Activated CD4-positive, alpha-beta T cell treated with anti-CD3 and anti-CD28 coated beads for 36 hours (primary cell): ENCODE measurements at regions of chr2 and their contacts with region 1.

Region 1: DNA sequence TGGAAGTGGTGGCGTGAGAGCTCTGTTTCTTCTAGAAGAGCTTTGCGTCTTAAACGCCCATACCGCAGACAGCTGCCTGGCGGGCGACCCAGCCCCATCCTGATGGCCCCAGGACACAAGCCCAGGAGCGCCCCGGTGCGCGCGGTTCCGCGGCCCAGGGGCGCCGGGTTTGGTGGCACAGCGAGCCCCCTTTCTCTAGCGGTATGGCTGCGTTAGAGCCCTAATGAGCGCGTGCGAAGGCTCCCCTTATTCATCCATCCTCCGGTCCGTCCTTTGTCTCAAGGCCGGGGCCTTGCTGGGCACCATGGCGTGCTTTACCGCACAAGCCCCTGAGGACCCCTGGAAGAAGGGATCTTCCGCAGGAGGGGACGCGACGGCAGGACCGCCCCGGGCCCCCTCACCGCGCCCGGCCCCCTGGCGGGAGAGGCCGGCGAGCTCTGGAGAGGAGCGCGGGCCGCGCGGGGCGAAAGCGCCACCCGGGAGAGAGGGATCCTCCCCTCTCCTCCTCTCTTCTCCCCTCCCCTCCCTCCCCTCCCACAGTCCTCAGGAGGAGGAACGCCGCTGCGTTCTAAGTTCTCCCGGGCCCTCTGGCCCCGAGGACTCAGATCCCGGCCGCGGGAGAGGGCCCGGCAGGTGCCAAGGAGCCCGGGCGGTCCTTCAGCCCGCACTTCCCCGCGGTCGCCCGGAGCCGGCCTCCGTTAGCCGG is 626 bp upstream of the SLC1A4 start:
- DNase-seq: peak; percentile 74
- ATAC-seq: peak; percentile 37
- H3K4me3 Mint-ChIP-seq: peak overlapping the region; percentile 68
- H3K27ac Mint-ChIP-seq: peak overlapping the region; percentile 55
- H3K4me1 Mint-ChIP-seq: peaks cover 46% of the 10 kb centered on the region
- H3K27me3 Mint-ChIP-seq: peaks cover 4% of the 10 kb centered on the region

Region 2: GRCh38 chr2:63588385-63589147 is 1400.0 kb before region 1 on chr2 and contains the starts of genes MDH1 and WDPCP:
- CTCF ChIA-PET with region 1: no interaction called
- POLR2A ChIA-PET with region 1: no interaction called
- intact Hi-C with region 1: loop called in 1 of 2 experiments (anchors 5 kb)
- DNase-seq: peak; percentile 96
- ATAC-seq: peak; percentile 92
- H3K4me3 Mint-ChIP-seq: peak within 1 kb of the TSS; percentile 100
- H3K27ac Mint-ChIP-seq: peak within 1 kb of the TSS; percentile 97
- H3K4me1 Mint-ChIP-seq: peaks cover 36% of the 10 kb centered on the region
- H3K27me3 Mint-ChIP-seq: no peaks in the 10 kb centered on the region
- total RNA-seq, gene MDH1: 212 to 265 TPM
- total RNA-seq, gene WDPCP: 6.5 to 8.2 TPM

Region 3: GRCh38 chr2:64144057-64145013 is 844.2 kb before region 1 on chr2 and contains the start of gene PELI1:
- CTCF ChIA-PET with region 1: no interaction called
- POLR2A ChIA-PET with region 1: no interaction called
- intact Hi-C with region 1: loop called in 1 of 2 experiments (anchors 5 kb)
- DNase-seq: peak; percentile 97
- ATAC-seq: peak; percentile 89
- H3K4me3 Mint-ChIP-seq: peak within 1 kb of the TSS; percentile 84
- H3K27ac Mint-ChIP-seq: peak within 1 kb of the TSS; percentile 97
- H3K4me1 Mint-ChIP-seq: peaks cover 30% of the 10 kb centered on the region
- H3K27me3 Mint-ChIP-seq: no peaks in the 10 kb centered on the region
- total RNA-seq, gene PELI1: 21.3 to 29.7 TPM

Region 4: GRCh38 chr2:64704161-64704560 is 284.4 kb before region 1 on chr2:
- CTCF ChIA-PET with region 1: no interaction called
- POLR2A ChIA-PET with region 1: interaction called, 11 read pairs
- intact Hi-C with region 1: no loop called
- DNase-seq: no peak
- ATAC-seq: no peak
- H3K4me3 Mint-ChIP-seq: no peak overlapping the region
- H3K27ac Mint-ChIP-seq: no peak overlapping the region
- H3K4me1 Mint-ChIP-seq: peaks cover 37% of the 10 kb centered on the region
- H3K27me3 Mint-ChIP-seq: no peaks in the 10 kb centered on the region

Region 5: GRCh38 chr2:65003037-65003436 is 14.5 kb after region 1 on chr2:
- CTCF ChIA-PET with region 1: no interaction called
- POLR2A ChIA-PET with region 1: no interaction called
- intact Hi-C with region 1: no loop called
- DNase-seq: no peak
- ATAC-seq: no peak
- H3K4me3 Mint-ChIP-seq: no peak overlapping the region
- H3K27ac Mint-ChIP-seq: no peak overlapping the region
- H3K4me1 Mint-ChIP-seq: peaks cover 6% of the 10 kb centered on the region
- H3K27me3 Mint-ChIP-seq: no peaks in the 10 kb centered on the region

Region 6: GRCh38 chr2:65031341-65032018 is 42.9 kb after region 1 on chr2:
- CTCF ChIA-PET with region 1: interaction called, 4 read pairs
- POLR2A ChIA-PET with region 1: no interaction called
- intact Hi-C with region 1: loop called in 1 of 2 experiments (anchors 5 kb)
- DNase-seq: no peak
- ATAC-seq: peak; percentile 59
- H3K4me3 Mint-ChIP-seq: no peak overlapping the region
- H3K27ac Mint-ChIP-seq: peak overlapping the region; percentile 56
- H3K4me1 Mint-ChIP-seq: peaks cover 23% of the 10 kb centered on the region
- H3K27me3 Mint-ChIP-seq: no peaks in the 10 kb centered on the region

Region 7: DNA sequence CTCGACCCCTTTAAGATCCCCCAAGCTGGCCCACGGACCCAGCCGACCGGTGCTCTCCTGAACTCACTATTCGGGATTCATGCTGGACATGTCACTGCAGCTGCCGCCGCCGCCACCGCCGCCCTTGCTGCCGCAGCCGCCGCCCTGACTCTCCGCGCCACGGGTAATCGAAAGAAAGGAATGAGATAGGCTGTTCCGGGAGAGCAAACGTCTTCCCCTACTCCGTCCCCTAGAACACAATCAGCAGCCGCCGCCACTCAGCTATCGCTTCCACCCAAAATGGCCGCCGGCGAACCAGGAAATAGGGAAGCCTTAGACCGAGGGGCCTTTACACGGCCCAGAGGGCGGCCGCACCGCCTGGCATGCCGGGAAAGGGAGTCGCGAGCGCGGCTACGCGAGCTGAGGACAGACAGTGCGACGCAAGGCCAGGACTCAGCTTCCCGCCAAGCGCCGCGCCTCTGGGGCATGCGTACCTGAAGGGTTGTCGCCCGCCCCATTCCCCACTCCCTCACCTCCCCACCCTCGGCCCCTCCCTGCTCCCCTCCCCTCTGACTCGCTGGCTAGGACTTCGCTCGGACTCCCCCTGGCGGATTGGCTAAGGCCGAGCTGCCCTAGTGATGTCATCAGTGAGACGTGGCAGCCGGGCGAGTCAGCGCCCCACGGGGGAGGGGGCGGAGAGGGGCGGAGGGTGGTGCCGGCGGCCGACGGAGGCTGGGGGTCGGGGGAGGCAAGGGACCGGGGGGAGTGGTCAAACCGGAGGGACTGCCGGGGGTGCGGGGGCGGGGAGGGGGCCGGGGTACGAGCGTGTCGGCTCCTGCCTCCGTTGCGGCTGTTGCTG is 141.5 kb after region 1 on chr2 and contains the start of gene RAB1A:
- CTCF ChIA-PET with region 1: no interaction called
- POLR2A ChIA-PET with region 1: interaction called, 6 read pairs
- intact Hi-C with region 1: loop called (anchors 1 to 5 kb)
- DNase-seq: peak; percentile 100
- ATAC-seq: peak; percentile 95
- H3K4me3 Mint-ChIP-seq: peak within 1 kb of the TSS; percentile 100
- H3K27ac Mint-ChIP-seq: peak within 1 kb of the TSS; percentile 100
- H3K4me1 Mint-ChIP-seq: peaks cover 30% of the 10 kb centered on the region
- H3K27me3 Mint-ChIP-seq: no peaks in the 10 kb centered on the region
- total RNA-seq, gene RAB1A: 77.1 to 84.8 TPM

Region 8: GRCh38 chr2:65380255-65380654 is 391.7 kb after region 1 on chr2:
- CTCF ChIA-PET with region 1: no interaction called
- POLR2A ChIA-PET with region 1: no interaction called
- intact Hi-C with region 1: no loop called
- DNase-seq: no peak
- ATAC-seq: no peak
- H3K4me3 Mint-ChIP-seq: no peak overlapping the region
- H3K27ac Mint-ChIP-seq: no peak overlapping the region
- H3K4me1 Mint-ChIP-seq: peaks cover 39% of the 10 kb centered on the region
- H3K27me3 Mint-ChIP-seq: peaks cover 12% of the 10 kb centered on the region

Region 9: DNA sequence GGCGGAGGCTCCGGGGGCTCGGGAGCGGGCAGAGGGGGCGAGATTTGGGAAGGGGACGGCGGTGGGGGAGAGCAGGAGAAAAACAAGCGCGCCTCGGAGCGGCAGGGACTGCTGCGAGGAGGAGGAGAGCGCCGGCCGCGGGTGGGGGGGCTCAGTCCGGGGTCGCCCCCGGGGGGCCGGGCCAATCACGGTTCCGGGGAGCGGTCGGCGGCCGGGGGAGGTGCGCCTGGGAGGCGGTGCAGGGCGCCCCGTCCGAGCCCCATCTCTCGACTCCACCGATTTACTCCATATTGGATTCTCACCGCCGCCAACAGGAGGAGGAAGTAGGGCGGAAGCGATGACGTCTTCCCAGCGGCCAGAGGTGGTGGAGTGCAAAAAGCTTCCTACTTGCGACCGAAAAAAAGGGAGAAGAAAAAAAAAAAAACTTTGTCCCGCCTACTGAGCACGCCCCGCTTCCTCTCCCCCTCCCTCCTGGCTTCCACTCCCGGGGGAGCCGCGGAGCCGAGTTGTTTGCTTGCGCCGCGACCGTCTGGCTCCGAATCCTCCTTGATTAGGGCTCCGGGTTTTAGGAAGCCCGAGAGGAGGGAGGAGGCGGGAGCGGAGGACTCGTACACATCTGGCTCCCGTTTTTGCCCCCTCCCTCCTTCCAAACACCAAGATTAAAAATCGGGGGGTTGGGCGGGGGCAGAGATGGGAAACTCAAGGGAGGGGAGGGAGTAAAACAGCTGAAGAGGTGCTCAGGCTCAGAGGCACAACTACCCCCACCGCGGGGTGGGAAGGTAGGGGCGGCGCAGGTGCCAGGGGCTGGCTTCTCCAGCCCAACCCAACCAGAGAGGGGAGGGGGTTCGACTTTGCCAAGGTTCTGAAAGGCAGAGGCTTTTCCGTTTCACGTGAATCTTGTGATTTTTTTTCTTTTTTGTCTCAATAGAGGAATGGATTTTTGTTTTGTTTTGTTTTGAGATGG is 443.9 kb after region 1 on chr2 and contains the start of gene SPRED2:
- CTCF ChIA-PET with region 1: no interaction called
- POLR2A ChIA-PET with region 1: no interaction called
- intact Hi-C with region 1: loop called in 1 of 2 experiments (anchors 2 kb)
- DNase-seq: peak; percentile 87
- ATAC-seq: peak; percentile 50
- H3K4me3 Mint-ChIP-seq: peak within 1 kb of the TSS; percentile 85
- H3K27ac Mint-ChIP-seq: peak within 1 kb of the TSS; percentile 73
- H3K4me1 Mint-ChIP-seq: peaks cover 16% of the 10 kb centered on the region
- H3K27me3 Mint-ChIP-seq: peaks cover 23% of the 10 kb centered on the region
- total RNA-seq, gene SPRED2: 6.7 to 7.9 TPM